Posterior vena cava (tissue), 2 donors: ENCODE measurements at regions of chr2 and their contacts with region 1.

Region 1: DNA sequence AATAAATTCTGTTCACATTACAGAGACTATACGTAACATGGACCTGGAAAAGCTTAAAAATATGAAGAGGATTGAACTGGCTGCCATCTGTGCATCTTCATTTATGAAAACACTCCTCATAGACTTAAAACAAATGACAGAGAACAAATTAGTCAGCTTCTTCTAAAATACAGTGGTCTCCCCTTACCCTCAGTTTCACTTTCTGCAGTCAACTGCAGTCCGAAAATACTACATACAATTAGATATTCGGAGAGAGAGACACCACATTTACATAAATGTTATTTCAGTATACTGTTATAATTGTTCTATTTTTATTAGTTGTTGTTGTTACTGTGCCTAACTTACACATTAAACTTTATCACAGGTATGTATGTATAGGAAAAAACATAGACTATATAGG is 6.5 kb downstream of the RNF103 start:
- DNase-seq: no peak

Region 2: DNA sequence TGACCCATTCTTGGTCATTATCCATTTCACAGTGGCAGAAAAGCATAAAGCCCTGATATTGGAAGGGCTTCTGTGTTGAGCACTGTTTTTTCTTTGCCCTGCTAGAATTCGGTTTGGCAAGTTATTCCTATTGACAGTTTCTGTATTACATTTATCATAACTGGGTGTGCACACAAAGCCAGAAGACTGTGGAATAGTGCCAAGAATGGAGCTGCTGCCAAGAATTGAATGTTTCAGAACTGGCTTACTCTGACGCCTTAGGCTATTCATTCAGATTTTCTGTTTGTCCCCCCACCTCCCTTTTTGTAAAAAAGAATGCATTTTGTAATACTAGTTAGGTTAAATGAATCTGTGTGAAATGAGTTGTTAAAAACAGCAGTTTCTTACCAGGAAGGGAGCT is 163.3 kb before region 1 on chr2:
- intact Hi-C with region 1: loop called in 1 of 2 experiments (anchors 10 kb)
- DNase-seq: no peak

Region 3: GRCh38 chr2:86649119-86649947 is 32.2 kb after region 1 on chr2:
- intact Hi-C with region 1: no loop called
- DNase-seq: no peak